ENCODE measurements at regions of chr2 and their contacts with region 1.

Region 1: DNA sequence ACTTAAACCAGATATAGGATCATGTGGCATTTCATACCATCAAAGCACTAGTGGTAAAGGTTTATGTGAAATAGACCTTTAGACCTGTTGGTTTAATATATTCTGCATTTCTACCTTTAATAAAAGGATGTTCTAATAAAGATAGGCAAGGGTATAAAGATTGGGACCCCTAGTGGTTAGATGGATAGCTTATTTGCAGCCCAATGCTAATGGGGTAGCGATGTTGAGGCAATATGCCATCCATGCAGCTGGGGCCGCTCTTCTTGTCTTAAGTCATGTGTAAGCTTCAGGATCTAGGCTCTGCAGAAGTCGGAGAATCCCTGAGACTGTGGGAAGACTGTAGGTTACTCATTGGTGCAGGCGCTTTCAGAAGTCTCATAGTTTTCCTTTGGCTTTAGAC is 114.9 kb downstream of the ICOS start:
- DNase-seq: peak in 2 of 35 experiments; percentile 3 to 47
- ATAC-seq: peak in 2 of 4 experiments; percentile 62 to 66
- H3K4me3 ChIP-seq: no peak overlapping the region
- H3K4me3 Mint-ChIP-seq: no peak overlapping the region
- H3K27ac ChIP-seq: no peak overlapping the region
- H3K27ac Mint-ChIP-seq: no peak overlapping the region
- H3K4me1 ChIP-seq: peaks cover 0 to 6% of the 10 kb centered on the region in 2 experiments
- H3K4me1 Mint-ChIP-seq: peaks cover 0 to 16% (median 11%) of the 10 kb centered on the region in 3 donors
- H3K27me3 ChIP-seq: no peaks in the 10 kb centered on the region
- H3K27me3 Mint-ChIP-seq: no peaks in the 10 kb centered on the region

Region 2: DNA sequence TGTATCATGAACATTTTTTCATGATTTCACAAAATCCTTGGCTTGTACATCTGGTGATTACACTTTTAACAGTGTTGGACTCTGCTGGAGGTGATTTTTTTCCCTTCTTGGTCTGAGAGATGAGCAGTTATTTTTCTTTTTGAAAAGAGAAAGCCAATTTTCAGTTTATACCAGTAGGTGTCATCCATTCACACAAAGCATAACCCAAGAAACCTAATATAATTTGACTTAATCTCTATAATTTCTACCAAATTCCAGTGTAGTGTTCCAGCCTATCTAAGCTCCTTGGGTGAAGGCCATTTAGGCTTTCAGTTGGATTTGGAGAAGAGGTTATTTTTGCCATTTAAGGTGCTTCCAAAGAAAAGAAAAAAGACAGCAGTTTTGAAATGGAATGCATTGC is 122.6 kb before region 1 on chr2:
- CTCF ChIA-PET with region 1: interaction called, 20 to 23 read pairs
- POLR2A ChIA-PET with region 1: no interaction called
- DNase-seq: peak in 1 of 35 experiments; percentile 57
- ATAC-seq: peak in 1 of 4 experiments; percentile 36
- H3K4me3 ChIP-seq: no peak overlapping the region
- H3K4me3 Mint-ChIP-seq: no peak overlapping the region
- H3K27ac ChIP-seq: no peak overlapping the region
- H3K27ac Mint-ChIP-seq: no peak overlapping the region
- H3K4me1 ChIP-seq: peaks cover 19% of the 10 kb centered on the region in 2 experiments
- H3K4me1 Mint-ChIP-seq: peaks cover 34 to 40% (median 39%) of the 10 kb centered on the region in 3 donors
- H3K27me3 ChIP-seq: no peaks in the 10 kb centered on the region
- H3K27me3 Mint-ChIP-seq: no peaks in the 10 kb centered on the region

Region 3: DNA sequence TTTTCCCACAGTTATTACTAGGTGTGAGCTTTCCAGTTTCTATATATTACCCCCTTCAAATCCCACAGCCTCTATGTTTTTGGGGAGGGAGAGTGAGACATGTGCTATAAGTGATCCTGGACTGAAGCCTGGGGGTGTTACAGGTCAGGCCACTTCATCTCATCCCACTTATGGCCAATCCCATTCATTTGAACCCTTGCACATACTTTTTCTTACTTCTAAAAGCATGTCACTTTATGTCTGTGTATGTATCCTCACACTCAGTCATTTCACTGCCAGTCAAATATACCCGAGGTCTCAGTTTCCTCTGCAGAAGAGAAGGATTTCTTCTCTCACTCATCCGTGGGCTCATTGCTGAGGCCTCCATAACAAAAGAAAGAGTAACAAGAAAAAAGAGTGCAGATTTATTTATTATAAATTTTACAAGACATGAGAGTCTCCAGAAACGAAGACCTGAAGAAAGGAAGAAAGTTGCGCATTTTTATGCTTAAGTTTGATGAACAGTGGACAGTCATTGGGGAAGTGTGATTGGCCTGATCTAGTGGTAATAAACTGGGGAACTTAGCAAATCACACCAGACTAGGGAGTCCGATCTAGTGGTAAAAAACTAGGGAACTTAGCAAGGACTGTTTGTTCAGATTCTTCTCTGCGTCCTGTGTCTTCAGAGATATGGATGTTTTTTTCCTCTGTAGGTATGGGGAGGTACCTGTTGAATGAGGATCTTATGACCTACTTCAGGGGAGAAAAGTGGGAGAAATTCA is 62.8 kb before region 1 on chr2:
- CTCF ChIA-PET with region 1: interaction called in 1 of 2 experiments, 11 read pairs
- POLR2A ChIA-PET with region 1: no interaction called
- DNase-seq: no peak
- ATAC-seq: no peak
- H3K4me3 ChIP-seq: no peak overlapping the region
- H3K4me3 Mint-ChIP-seq: peak overlapping the region in 1 of 3 donors; percentile 38
- H3K27ac ChIP-seq: no peak overlapping the region
- H3K27ac Mint-ChIP-seq: peak overlapping the region in 1 of 2 donors; percentile 3
- H3K4me1 ChIP-seq: peaks cover 4 to 25% of the 10 kb centered on the region in 2 experiments
- H3K4me1 Mint-ChIP-seq: peaks cover 30 to 47% (median 31%) of the 10 kb centered on the region in 3 donors
- H3K27me3 ChIP-seq: no peaks in the 10 kb centered on the region
- H3K27me3 Mint-ChIP-seq: no peaks in the 10 kb centered on the region

Measured in T-cell (primary cell).